ENCODE measurements at regions of chr18 and their contacts with region 1.

Region 1: GRCh38 chr18:12934454-12935071 is 13.2 kb upstream of the SEH1L start:
- DNase-seq: peak; percentile 84 to 91 (median 87)
- H3K4me3 ChIP-seq: peak overlapping the region in 1 of 7 experiments; percentile 12
- H3K27ac ChIP-seq: no peak overlapping the region
- H3K4me1 ChIP-seq: peaks cover 0 to 3% (median 0%) of the 10 kb centered on the region in 4 experiments
- H3K27me3 ChIP-seq: no peaks in the 10 kb centered on the region

Region 2: DNA sequence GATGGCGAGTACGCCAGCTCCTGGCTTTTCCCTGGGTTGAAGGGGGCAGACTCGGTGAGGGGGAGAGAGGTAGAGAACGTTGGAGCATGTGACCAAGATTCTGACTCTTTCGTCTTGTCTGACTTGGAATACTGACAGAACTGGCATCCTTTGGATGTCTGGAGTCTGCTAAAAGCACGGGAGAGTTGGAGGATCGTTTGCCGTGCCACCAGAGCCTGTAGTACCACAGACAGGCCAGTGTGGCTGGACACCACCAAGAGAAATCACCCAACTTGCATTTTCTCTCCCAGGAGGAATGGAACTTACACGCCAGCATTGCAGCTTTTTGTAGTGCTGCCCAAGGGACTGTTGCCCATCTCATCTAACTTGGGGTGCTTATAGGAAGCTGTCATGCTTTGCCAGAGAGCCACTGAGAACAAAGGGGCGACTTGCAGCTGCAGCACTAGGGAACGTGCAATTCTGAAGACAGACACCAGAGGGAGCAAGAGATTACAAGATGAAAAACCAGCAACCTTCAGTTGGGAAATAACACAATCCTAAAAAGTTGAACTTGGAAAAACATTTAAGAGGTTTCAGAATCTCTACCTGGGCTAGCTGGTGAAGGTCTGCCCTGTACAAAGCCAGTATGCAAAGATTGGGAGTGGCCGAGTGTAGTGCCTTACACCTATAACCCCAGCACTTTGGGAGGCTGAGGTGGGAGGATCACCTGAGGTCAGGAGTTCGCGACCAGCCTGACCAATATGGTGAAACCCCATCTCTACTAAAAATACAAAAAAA is 207.6 kb before region 1 on chr18:
- CTCF ChIA-PET with region 1: interaction called, 130 read pairs
- POLR2A ChIA-PET with region 1: interaction called, 3 read pairs
- DNase-seq: peak; percentile 72 to 85 (median 76)
- H3K4me3 ChIP-seq: no peak overlapping the region
- H3K27ac ChIP-seq: no peak overlapping the region
- H3K4me1 ChIP-seq: peaks cover 0 to 12% (median 9%) of the 10 kb centered on the region in 4 experiments
- H3K27me3 ChIP-seq: no peaks in the 10 kb centered on the region

Region 3: GRCh38 chr18:12744103-12744502 is 190.5 kb before region 1 on chr18:
- CTCF ChIA-PET with region 1: interaction called, 74 read pairs
- POLR2A ChIA-PET with region 1: no interaction called
- DNase-seq: peak; percentile 68 to 83 (median 76)
- H3K4me3 ChIP-seq: no peak overlapping the region
- H3K27ac ChIP-seq: no peak overlapping the region
- H3K4me1 ChIP-seq: no peaks in the 10 kb centered on the region
- H3K27me3 ChIP-seq: no peaks in the 10 kb centered on the region

Region 4: GRCh38 chr18:12883684-12884405 is 50.7 kb before region 1 on chr18 and contains the start of gene PTPN2:
- CTCF ChIA-PET with region 1: interaction called, 28 read pairs
- POLR2A ChIA-PET with region 1: no interaction called
- DNase-seq: peak; percentile 93 to 96 (median 95)
- H3K4me3 ChIP-seq: peak within 1 kb of the TSS; percentile 53 to 92 (median 84)
- H3K27ac ChIP-seq: peak within 1 kb of the TSS; percentile 95 to 98
- H3K4me1 ChIP-seq: peaks cover 14 to 47% (median 27%) of the 10 kb centered on the region in 4 experiments
- H3K27me3 ChIP-seq: no peaks in the 10 kb centered on the region

Region 5: DNA sequence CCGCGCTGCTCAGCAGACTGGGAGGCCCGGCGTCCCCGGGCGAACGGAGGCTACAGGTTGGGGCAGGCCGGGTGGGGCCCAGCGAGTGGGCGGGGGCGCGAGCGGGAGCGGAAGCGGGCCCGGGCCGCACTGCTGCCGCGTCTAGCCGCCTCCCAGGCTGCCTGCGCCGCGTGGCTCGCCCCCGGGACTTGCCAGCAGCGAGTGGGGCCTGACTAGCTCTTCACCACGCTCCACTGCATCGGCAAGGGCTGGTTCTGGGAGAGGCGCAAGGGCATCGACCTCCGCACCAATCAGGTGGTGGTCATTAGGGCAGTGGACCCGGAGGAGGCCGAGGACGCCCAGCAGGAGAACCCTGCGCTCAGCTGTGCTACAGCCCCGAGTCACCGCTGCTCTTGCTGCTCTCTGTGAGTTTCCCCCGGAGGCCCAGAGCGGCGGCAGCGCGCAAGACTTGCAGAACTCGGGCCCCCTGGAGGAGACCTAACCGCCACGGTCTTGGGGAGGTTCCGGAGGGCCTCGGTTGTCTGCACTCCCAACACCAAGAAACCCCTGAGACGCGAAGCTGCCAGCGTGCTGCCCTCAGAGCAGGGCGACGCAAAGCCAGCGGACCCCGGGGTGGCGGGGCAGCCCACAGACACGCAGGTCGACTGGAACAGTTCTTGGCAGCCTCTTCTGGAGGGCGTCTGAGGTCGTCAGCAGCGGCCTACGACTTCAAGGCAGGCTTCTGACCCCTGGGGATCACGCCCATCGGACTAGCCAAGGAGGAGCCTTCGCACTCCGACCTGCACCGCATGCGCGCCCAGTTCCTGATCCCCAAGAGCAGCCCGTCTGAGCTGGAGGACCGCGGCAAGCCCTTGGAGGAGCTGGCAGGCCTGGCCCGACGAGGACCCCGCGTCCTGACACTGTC is 23.3 kb before region 1 on chr18:
- CTCF ChIA-PET with region 1: interaction called, 19 read pairs
- POLR2A ChIA-PET with region 1: no interaction called
- DNase-seq: peak; percentile 56 to 77 (median 71)
- H3K4me3 ChIP-seq: peak overlapping the region; percentile 4 to 69 (median 46)
- H3K27ac ChIP-seq: no peak overlapping the region
- H3K4me1 ChIP-seq: peaks cover 0 to 14% (median 11%) of the 10 kb centered on the region in 4 experiments
- H3K27me3 ChIP-seq: peaks cover 0 to 30% (median 10%) of the 10 kb centered on the region in 5 experiments

Region 6: DNA sequence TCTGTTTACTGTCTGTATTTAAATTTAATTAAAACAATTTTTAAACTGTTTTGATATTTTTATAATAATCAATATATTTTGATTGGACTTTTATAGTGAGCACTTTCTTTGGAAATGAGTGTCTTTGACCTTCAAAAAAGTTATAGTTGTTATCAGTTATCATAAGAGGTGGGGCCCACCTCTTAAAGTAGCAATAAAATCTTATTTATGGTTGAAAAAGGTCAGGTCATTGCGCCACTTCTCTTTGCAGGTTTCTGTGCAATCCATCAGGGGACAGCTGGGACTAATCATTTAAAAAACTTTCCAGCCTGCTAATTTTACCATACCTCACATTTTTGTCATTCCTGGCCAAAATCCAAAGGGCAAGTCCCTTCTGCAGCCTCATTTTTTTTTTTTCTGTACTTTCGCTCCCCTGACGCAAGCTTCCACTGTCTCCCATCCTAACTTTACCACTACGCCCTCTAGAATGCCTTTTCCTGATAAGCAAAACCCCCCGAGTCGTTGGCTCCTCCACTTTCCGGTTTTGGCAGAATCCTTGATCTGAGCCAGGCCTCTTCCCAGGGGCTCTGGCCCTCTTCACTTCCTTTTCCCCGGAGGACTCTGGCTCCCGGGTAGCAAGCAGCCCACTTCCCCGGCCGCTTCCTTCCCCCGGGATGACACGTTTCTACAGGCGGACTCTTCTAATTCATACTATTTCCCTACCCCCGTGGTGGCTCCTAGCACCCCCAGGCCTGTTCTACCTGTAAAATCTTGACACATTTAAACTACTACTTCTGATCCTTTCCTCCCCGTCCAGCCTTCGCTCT is 12.2 kb after region 1 on chr18:
- CTCF ChIA-PET with region 1: interaction called, 54 read pairs
- POLR2A ChIA-PET with region 1: no interaction called
- DNase-seq: peak; percentile 32 to 74 (median 71)
- H3K4me3 ChIP-seq: peak overlapping the region; percentile 73 to 90 (median 81)
- H3K27ac ChIP-seq: peak overlapping the region; percentile 70 to 92
- H3K4me1 ChIP-seq: peaks cover 0 to 26% (median 23%) of the 10 kb centered on the region in 4 experiments
- H3K27me3 ChIP-seq: no peaks in the 10 kb centered on the region